Astrocyte of the cerebellum (primary cell): ENCODE measurements at regions of chr2 and their contacts with region 1.

Region 1: GRCh38 chr2:42077343-42077742 is 29.5 kb downstream of the PKDCC start:
- DNase-seq: no peak
- H3K4me3 ChIP-seq: no peak overlapping the region
- CTCF ChIP-seq: no peak

Region 2: GRCh38 chr2:42040643-42041278 is 36.6 kb before region 1 on chr2:
- in situ Hi-C with region 1: loop called (anchors 5 kb)
- DNase-seq: no peak
- H3K4me3 ChIP-seq: no peak overlapping the region
- CTCF ChIP-seq: peak; percentile 18

Region 3: DNA sequence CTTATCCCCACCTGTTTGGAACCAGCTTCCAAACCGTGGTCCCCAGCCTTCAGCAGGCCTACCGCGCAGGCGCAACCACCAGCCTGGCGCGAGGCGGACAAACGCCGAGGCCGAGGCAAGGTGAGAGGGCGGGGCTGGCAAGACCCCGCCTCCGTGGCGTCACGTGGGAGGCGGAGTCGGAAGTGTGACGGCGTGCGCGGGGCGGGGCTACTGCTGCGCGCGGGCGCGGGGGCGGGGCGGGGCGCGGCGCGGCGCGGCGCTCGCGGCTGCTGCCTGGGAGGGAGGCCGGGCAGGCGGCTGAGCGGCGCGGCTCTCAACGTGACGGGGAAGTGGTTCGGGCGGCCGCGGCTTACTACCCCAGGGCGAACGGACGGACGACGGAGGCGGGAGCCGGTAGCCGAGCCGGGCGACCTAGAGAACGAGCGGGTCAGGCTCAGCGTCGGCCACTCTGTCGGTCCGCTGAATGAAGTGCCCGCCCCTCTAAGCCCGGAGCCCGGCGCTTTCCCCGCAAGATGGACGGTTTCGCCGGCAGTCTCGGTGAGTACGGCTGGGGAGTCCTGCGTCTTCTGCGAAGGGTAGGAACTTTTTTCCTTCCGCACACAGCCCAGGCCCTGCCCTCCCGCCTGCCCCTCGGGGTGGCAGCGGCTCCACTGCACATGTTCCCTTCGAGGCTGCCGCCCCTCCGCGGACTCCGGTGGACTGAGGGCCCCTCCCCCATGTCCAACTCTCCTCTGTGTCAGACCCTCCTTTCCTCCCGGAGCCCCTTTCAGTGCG is 91.9 kb after region 1 on chr2 and contains the start of gene EML4:
- in situ Hi-C with region 1: no loop called
- DNase-seq: peak; percentile 71
- H3K4me3 ChIP-seq: peak within 1 kb of the TSS; percentile 87
- CTCF ChIP-seq: no peak

Region 4: DNA sequence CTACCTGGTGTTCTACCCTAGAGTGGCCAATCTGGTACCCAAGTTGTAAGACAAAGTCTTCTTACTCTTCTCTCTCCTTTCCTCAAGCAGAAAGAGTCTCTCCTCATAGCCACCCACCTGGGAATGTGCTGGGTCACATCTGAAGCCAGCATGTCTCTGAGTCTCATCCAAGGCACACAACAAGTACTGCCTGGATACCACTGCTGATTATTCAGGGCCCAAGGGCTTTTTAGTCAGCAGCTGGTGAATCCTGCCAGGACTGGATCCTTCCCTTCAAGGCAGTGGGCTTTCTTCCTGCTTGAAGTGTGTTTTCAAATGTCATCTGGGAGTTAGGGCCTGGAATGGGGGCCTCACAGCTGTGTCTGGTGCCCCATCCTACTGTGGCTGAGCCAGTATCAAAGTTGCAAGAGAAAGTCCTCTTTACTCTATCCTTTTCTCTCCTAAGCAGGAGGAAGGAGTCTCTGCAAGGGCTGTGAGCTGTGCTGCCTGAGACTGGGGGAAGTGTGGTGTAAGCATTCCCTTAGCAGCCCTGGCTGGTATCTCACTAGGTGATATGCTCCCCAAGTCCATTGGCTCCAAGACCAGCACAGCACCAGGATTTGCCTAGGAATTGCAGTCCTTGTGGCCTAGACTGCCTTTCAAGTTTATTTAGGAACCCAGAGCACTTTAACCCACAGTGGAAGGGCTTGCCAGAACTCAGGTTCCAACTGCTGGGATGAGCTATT is 659.4 kb after region 1 on chr2:
- in situ Hi-C with region 1: no loop called
- DNase-seq: no peak
- H3K4me3 ChIP-seq: no peak overlapping the region
- CTCF ChIP-seq: no peak